ENCODE measurements at regions of chr3 and their contacts with region 1.

Region 1: DNA sequence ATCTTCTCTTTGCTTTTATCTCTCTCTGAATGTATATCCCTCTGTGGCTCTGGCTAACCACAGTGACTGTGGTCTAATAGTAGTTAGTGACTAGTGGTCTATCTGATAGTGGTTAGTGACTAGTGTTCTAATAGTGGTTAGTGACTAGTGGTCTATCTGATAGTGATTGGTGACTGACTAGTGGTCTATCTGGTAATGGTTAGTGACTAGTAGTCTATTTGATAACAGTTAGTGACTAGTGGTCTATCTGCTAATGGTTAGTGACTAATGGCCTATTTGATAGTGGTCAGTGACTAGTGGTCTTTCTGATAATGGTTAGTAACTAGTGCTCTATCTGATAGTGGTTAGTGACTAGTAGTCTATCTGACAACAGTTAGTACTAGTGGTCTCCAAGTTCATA is 110.5 kb downstream of the MDFIC2 start:
- DNase-seq: no peak
- ATAC-seq: no peak

Region 2: GRCh38 chr3:69425261-69425660 is 776.7 kb before region 1 on chr3:
- intact Hi-C with region 1: no loop called
- DNase-seq: no peak
- ATAC-seq: peak; percentile 78

Region 3: GRCh38 chr3:70333080-70333479 is 131.1 kb after region 1 on chr3:
- intact Hi-C with region 1: loop called in 1 of 2 experiments (anchors 5 kb)
- DNase-seq: no peak
- ATAC-seq: no peak

Measured in left colon (tissue), 2 donors.